B cell (primary cell): ENCODE measurements at regions of chr11 and their contacts with region 1.

Region 1: GRCh38 chr11:36492724-36493304 is 17.3 kb downstream of the TRAF6 start:
- DNase-seq: peak; percentile 74
- ATAC-seq: peak; percentile 64
- H3K4me3 ChIP-seq: no peak overlapping the region
- H3K4me3 Mint-ChIP-seq: no peak overlapping the region
- H3K27ac ChIP-seq: peak overlapping the region in 1 of 2 donors; percentile 41
- H3K27ac Mint-ChIP-seq: no peak overlapping the region
- H3K4me1 ChIP-seq: peaks cover 8% of the 10 kb centered on the region in 2 donors
- H3K4me1 Mint-ChIP-seq: peaks cover 13% of the 10 kb centered on the region
- H3K27me3 ChIP-seq: no peaks in the 10 kb centered on the region
- H3K27me3 Mint-ChIP-seq: no peaks in the 10 kb centered on the region
- CTCF ChIP-seq: peak; percentile 92

Region 2: GRCh38 chr11:36041988-36042611 is 450.7 kb before region 1 on chr11:
- CTCF ChIA-PET with region 1: interaction called, 3 read pairs
- POLR2A ChIA-PET with region 1: no interaction called
- intact Hi-C with region 1: loop called (anchors 5 kb)
- DNase-seq: no peak
- ATAC-seq: no peak
- H3K4me3 ChIP-seq: no peak overlapping the region
- H3K4me3 Mint-ChIP-seq: no peak overlapping the region
- H3K27ac ChIP-seq: no peak overlapping the region
- H3K27ac Mint-ChIP-seq: no peak overlapping the region
- H3K4me1 ChIP-seq: no peaks in the 10 kb centered on the region
- H3K4me1 Mint-ChIP-seq: no peaks in the 10 kb centered on the region
- H3K27me3 ChIP-seq: peaks cover 0 to 3% (median 0%) of the 10 kb centered on the region in 4 experiments
- H3K27me3 Mint-ChIP-seq: peaks cover 15% of the 10 kb centered on the region
- CTCF ChIP-seq: peak; percentile 24

Region 3: GRCh38 chr11:36289226-36289852 is 203.5 kb before region 1 on chr11 and contains the start of gene COMMD9:
- CTCF ChIA-PET with region 1: interaction called, 142 read pairs
- POLR2A ChIA-PET with region 1: no interaction called
- intact Hi-C with region 1: loop called (anchors 1 kb)
- DNase-seq: peak; percentile 92
- ATAC-seq: peak; percentile 94
- H3K4me3 ChIP-seq: peak within 1 kb of the TSS; percentile 66 to 98 (median 89)
- H3K4me3 Mint-ChIP-seq: peak within 1 kb of the TSS; percentile 97
- H3K27ac ChIP-seq: peak within 1 kb of the TSS; percentile 35 to 40
- H3K27ac Mint-ChIP-seq: peak within 1 kb of the TSS; percentile 90
- H3K4me1 ChIP-seq: peaks cover 12 to 16% of the 10 kb centered on the region in 2 donors
- H3K4me1 Mint-ChIP-seq: peaks cover 30% of the 10 kb centered on the region
- H3K27me3 ChIP-seq: no peaks in the 10 kb centered on the region
- H3K27me3 Mint-ChIP-seq: no peaks in the 10 kb centered on the region
- CTCF ChIP-seq: no peak
- total RNA-seq, gene COMMD9: 47.4 and 48.9 TPM in 2 replicates

Region 4: GRCh38 chr11:36306888-36307287 is 185.9 kb before region 1 on chr11:
- CTCF ChIA-PET with region 1: interaction called, 27 read pairs
- POLR2A ChIA-PET with region 1: no interaction called
- intact Hi-C with region 1: loop called (anchors 1 kb)
- DNase-seq: peak; percentile 25
- ATAC-seq: no peak
- H3K4me3 ChIP-seq: no peak overlapping the region
- H3K4me3 Mint-ChIP-seq: no peak overlapping the region
- H3K27ac ChIP-seq: no peak overlapping the region
- H3K27ac Mint-ChIP-seq: no peak overlapping the region
- H3K4me1 ChIP-seq: no peaks in the 10 kb centered on the region
- H3K4me1 Mint-ChIP-seq: no peaks in the 10 kb centered on the region
- H3K27me3 ChIP-seq: no peaks in the 10 kb centered on the region
- H3K27me3 Mint-ChIP-seq: peaks cover 25% of the 10 kb centered on the region
- CTCF ChIP-seq: peak; percentile 60

Region 5: DNA sequence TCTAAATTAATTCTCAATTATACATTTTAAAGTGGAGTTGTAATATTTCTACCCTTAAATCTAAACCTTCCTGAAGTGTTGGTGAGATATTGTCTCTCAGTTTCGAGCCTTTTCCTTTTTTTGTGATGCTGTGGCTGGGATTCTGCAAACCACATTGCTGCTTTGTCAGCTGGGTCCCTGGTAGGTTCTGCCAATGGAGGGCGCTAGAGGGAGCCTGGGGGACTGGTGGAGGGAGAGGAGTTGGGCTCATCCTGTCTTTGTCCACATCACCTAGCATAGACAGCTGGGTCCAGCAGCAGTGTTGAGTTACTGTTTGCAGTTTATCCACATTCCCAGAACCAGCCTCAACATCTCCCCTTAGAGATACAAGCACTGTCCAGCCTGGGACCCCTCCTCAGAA is 23.8 kb before region 1 on chr11:
- CTCF ChIA-PET with region 1: interaction called, 10 read pairs
- POLR2A ChIA-PET with region 1: interaction called, 5 read pairs
- intact Hi-C with region 1: no loop called
- DNase-seq: no peak
- ATAC-seq: no peak
- H3K4me3 ChIP-seq: no peak overlapping the region
- H3K4me3 Mint-ChIP-seq: no peak overlapping the region
- H3K27ac ChIP-seq: no peak overlapping the region
- H3K27ac Mint-ChIP-seq: no peak overlapping the region
- H3K4me1 ChIP-seq: no peaks in the 10 kb centered on the region
- H3K4me1 Mint-ChIP-seq: no peaks in the 10 kb centered on the region
- H3K27me3 ChIP-seq: no peaks in the 10 kb centered on the region
- H3K27me3 Mint-ChIP-seq: no peaks in the 10 kb centered on the region
- CTCF ChIP-seq: no peak

Region 6: GRCh38 chr11:36509694-36510566 is 17.1 kb after region 1 on chr11 and contains the start of gene TRAF6:
- CTCF ChIA-PET with region 1: interaction called, 23 read pairs
- POLR2A ChIA-PET with region 1: no interaction called
- intact Hi-C with region 1: loop called (anchors 1 kb)
- DNase-seq: peak; percentile 92
- ATAC-seq: peak; percentile 94
- H3K4me3 ChIP-seq: peak within 1 kb of the TSS; percentile 73 to 95 (median 92)
- H3K4me3 Mint-ChIP-seq: peak within 1 kb of the TSS; percentile 96
- H3K27ac ChIP-seq: peak within 1 kb of the TSS; percentile 72 to 86
- H3K27ac Mint-ChIP-seq: peak within 1 kb of the TSS; percentile 97
- H3K4me1 ChIP-seq: peaks cover 16 to 17% of the 10 kb centered on the region in 2 donors
- H3K4me1 Mint-ChIP-seq: peaks cover 27% of the 10 kb centered on the region
- H3K27me3 ChIP-seq: peaks cover 0 to 2% (median 0%) of the 10 kb centered on the region in 4 experiments
- H3K27me3 Mint-ChIP-seq: peaks cover 16% of the 10 kb centered on the region
- CTCF ChIP-seq: peak; percentile 91
- total RNA-seq, gene TRAF6: 20.2 and 22.4 TPM in 2 replicates

Region 7: DNA sequence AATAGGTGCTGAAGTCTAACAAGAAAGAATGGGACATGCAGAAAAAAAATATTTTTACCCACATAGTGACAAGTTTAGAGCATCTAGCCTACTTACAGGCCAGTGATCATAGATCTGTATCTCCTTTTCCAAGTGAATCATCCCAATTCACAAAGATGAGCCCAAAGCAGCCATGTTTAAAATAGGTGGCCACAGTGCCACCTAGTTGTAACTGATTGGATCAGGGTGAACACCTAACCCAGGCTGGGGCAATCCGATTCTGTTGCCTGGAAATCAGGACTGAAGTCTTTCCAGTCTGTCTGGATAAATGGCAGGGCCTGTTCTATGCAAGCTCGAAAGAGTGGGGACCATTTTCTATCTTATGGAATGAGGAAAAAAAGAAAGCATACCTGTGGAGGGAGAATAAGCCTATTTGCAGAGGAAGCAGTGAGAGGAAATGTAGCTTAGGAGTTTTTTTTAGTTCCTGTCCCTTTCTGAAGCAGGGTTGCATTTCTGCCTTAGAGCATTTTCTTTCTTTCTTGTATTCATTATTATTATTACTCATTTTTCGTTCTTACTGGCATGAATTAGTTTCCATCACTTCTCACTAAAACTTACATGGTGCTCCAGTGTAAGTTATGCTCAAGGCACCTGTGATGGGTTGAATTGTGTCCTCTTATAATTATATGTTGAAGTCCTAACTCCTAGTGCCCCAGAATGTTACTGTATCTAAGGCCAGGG is 218.5 kb after region 1 on chr11:
- CTCF ChIA-PET with region 1: no interaction called
- POLR2A ChIA-PET with region 1: no interaction called
- intact Hi-C with region 1: no loop called
- DNase-seq: no peak
- ATAC-seq: no peak
- H3K4me3 ChIP-seq: no peak overlapping the region
- H3K4me3 Mint-ChIP-seq: no peak overlapping the region
- H3K27ac ChIP-seq: no peak overlapping the region
- H3K27ac Mint-ChIP-seq: no peak overlapping the region
- H3K4me1 ChIP-seq: no peaks in the 10 kb centered on the region
- H3K4me1 Mint-ChIP-seq: no peaks in the 10 kb centered on the region
- H3K27me3 ChIP-seq: peaks cover 0 to 3% (median 0%) of the 10 kb centered on the region in 4 experiments
- H3K27me3 Mint-ChIP-seq: peaks cover 7% of the 10 kb centered on the region
- CTCF ChIP-seq: no peak